ENCODE measurements at regions of chr1 and their contacts with region 1.

Region 1: DNA sequence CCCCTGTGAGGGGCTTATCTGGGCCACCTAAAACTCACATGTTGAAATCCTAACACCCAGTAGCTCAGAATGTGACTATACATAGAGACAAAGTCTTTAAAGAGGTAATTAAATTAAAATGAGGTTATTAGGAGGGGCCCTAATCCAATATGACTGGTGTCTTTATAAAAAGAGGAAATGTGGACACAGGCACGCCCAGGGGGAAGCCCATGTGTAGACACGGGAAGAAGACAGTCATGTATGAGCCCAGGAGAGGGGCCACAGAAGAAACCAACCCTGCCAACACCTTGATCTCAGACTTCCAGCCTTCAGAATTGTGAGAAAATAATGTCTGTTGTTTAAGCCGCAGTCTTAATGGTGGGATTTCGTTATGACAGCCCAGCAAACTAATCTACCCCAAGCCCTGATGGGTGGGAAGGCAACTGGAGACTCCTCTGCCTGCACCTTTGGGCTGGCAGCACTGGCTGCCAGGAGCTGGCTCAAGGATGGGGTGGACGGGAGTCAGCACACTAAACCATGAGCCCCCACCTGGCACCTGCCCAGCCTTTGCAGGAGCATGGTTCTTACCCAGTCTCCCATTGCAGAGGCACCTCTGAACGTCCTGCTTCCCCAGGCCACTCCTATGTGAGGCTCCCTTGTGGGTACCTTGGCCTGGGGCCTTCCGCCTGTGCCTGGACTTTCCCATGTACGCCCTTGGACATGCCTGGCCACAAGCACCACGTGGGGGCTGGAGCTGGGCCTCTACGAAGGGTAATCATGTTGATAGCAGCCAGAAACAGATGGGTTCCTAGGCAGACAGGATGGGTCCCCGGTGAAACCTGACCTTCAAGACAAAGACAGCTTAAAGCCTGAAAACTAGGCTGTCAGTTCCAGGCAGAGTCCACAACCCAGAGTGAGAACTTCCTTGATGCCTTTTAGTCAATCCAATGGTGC is 57.1 kb upstream of the DMRTB1 start:
- DNase-seq: no peak
- ATAC-seq: peak; percentile 62
- H3K4me3 ChIP-seq: no peak overlapping the region
- H3K27ac ChIP-seq: no peak overlapping the region
- H3K4me1 ChIP-seq: no peaks in the 10 kb centered on the region; the same call in 1 of the 2 replicates
- H3K27me3 ChIP-seq: peaks cover 1 to 2% of the 10 kb centered on the region in 2 experiments; a peak in 3 of 4 replicates
- CTCF ChIP-seq: no peak
- EP300 ChIP-seq: no peak
- POLR2A ChIP-seq: no peak
- RAD21 ChIP-seq: no peak

Region 2: GRCh38 chr1:53330819-53331218 is 71.3 kb before region 1 on chr1:
- CTCF ChIA-PET with region 1: no interaction called
- POLR2A ChIA-PET with region 1: no interaction called
- RAD21 ChIA-PET with region 1: no interaction called
- SMC1A ChIA-PET with region 1: no interaction called
- in situ Hi-C with region 1: no loop called
- intact Hi-C with region 1: no loop called
- DNase-seq: no peak
- ATAC-seq: no peak
- H3K4me3 ChIP-seq: no peak overlapping the region
- H3K27ac ChIP-seq: no peak overlapping the region
- H3K4me1 ChIP-seq: peaks cover 5% of the 10 kb centered on the region; the same call in 1 of the 2 replicates
- H3K27me3 ChIP-seq: no peaks in the 10 kb centered on the region
- CTCF ChIP-seq: no peak
- EP300 ChIP-seq: no peak
- POLR2A ChIP-seq: no peak
- RAD21 ChIP-seq: no peak

Region 3: DNA sequence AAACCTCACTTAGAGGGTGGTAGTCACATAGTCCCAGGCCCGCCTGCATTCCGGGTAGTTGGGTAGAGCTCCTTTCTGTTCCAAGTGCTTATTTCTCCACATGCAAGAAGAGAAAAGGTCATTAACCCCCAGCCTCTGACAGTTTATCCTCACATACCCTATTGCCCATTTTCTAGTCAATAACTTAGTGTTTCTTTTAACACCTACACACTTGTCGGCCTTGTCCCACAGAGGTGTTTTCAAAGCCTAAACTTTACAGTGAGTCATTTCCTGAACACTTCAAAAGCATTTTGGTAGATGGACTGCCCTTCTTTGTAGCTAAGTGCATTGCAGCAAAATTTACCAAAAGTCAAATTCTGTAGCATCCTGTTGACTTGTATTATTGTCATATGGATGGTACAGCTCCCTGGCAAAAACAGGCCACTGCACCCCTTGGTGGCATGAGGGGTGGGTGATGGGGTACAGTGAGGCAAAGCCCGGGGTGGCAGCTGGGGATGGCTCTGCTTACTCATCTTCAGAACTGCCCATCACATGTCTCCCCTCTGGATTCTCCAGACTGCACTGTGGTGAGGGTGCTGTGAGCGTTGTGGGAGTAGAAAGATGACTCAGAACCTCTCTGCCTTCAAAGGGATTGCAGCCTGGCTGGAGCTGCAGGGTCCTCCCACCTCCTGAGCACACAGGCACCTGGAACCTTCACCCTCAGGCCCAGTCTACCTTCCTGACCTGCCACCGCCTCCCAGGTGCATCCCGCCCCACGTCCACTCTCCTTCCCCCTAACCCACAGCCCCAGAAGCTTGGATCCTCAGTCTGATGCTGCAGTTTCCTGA is 11.3 kb after region 1 on chr1:
- CTCF ChIA-PET with region 1: interaction called, 20 read pairs
- POLR2A ChIA-PET with region 1: interaction called, 18 read pairs
- RAD21 ChIA-PET with region 1: interaction called, 17 read pairs
- SMC1A ChIA-PET with region 1: interaction called, 25 read pairs
- in situ Hi-C with region 1: no loop called
- intact Hi-C with region 1: no loop called
- DNase-seq: peak; percentile 60
- ATAC-seq: peak; percentile 70
- H3K4me3 ChIP-seq: no peak overlapping the region
- H3K27ac ChIP-seq: peak overlapping the region; percentile 13
- H3K4me1 ChIP-seq: peaks cover 35% of the 10 kb centered on the region
- H3K27me3 ChIP-seq: no peaks in the 10 kb centered on the region
- CTCF ChIP-seq: no peak
- EP300 ChIP-seq: peak; percentile 13 to 60; a peak in 2 of 4 replicates
- POLR2A ChIP-seq: no peak
- RAD21 ChIP-seq: no peak

Region 4: GRCh38 chr1:53465080-53465479 is 63.0 kb after region 1 on chr1:
- CTCF ChIA-PET with region 1: no interaction called
- POLR2A ChIA-PET with region 1: no interaction called
- RAD21 ChIA-PET with region 1: no interaction called
- SMC1A ChIA-PET with region 1: no interaction called
- in situ Hi-C with region 1: no loop called
- intact Hi-C with region 1: no loop called
- DNase-seq: no peak
- ATAC-seq: no peak
- H3K4me3 ChIP-seq: no peak overlapping the region
- H3K27ac ChIP-seq: no peak overlapping the region
- H3K4me1 ChIP-seq: no peaks in the 10 kb centered on the region; the same call in 1 of the 2 replicates
- H3K27me3 ChIP-seq: no peaks in the 10 kb centered on the region; a peak in 1 of 4 replicates
- CTCF ChIP-seq: no peak
- EP300 ChIP-seq: no peak
- POLR2A ChIP-seq: no peak
- RAD21 ChIP-seq: no peak

Region 5: GRCh38 chr1:53765657-53766056 is 363.6 kb after region 1 on chr1:
- CTCF ChIA-PET with region 1: no interaction called
- POLR2A ChIA-PET with region 1: no interaction called
- RAD21 ChIA-PET with region 1: no interaction called
- SMC1A ChIA-PET with region 1: no interaction called
- in situ Hi-C with region 1: no loop called
- intact Hi-C with region 1: no loop called
- DNase-seq: no peak
- ATAC-seq: peak; percentile 69
- H3K4me3 ChIP-seq: no peak overlapping the region
- H3K27ac ChIP-seq: no peak overlapping the region
- H3K4me1 ChIP-seq: peaks cover 3% of the 10 kb centered on the region; the same call in 1 of the 2 replicates
- H3K27me3 ChIP-seq: no peaks in the 10 kb centered on the region
- CTCF ChIP-seq: no peak
- EP300 ChIP-seq: no peak
- POLR2A ChIP-seq: no peak
- RAD21 ChIP-seq: no peak

Measured in GM12878 (cell line).